Stomach (tissue), 19 donors: ENCODE measurements at regions of chr21 and their contacts with region 1.

Region 1: DNA sequence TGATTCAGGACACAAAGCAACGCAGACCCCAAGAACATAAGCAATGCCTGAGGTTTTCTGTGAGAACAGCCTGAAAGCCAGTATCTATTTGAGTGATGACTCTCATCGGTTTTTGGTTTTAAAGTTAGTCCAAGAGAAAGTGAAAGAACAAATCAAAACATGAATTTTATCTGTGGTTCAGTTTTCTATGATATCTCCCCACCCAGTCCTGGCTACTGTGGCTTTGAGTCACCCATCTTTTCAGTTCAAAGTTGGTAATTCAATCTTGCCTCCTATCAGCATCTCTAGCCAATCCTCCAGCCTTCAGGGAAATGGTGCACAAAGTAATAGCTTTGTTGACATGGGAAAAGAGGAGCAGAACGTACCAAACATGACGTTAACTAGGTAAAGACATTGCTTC is 40.5 kb upstream of the KRTAP19-8 start:
- DNase-seq: no peak
- H3K4me3 ChIP-seq: no peak overlapping the region
- H3K27ac ChIP-seq: no peak overlapping the region
- H3K4me1 ChIP-seq: no peaks in the 10 kb centered on the region
- H3K27me3 ChIP-seq: peaks cover 0 to 11% (median 0%) of the 10 kb centered on the region in 3 donors
- CTCF ChIP-seq: no peak
- EP300 ChIP-seq: no peak
- POLR2A ChIP-seq: no peak

Region 2: DNA sequence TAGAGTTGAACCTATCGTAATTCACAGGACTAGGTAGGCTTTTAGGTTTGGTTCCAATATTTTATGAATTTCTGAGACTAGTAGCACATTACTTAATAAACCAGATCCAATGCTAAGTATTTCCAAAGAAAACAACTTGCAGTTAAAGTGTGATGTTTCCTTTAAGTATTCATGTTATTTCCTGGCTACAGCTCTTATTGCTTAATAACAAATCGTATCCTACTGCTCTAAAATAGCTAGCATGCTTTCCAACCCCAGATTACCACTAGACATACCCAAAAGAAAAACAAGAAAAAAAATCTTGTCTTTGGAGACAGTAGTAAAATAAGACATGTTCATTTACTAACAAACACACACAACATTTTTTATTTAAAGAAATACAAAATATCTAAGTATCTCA is 742.2 kb before region 1 on chr21:
- intact Hi-C with region 1: loop called (anchors 10 kb)
- DNase-seq: no peak
- H3K4me3 ChIP-seq: no peak overlapping the region
- H3K27ac ChIP-seq: no peak overlapping the region
- H3K4me1 ChIP-seq: no peaks in the 10 kb centered on the region
- H3K27me3 ChIP-seq: no peaks in the 10 kb centered on the region
- CTCF ChIP-seq: no peak
- EP300 ChIP-seq: no peak
- POLR2A ChIP-seq: no peak

Region 3: DNA sequence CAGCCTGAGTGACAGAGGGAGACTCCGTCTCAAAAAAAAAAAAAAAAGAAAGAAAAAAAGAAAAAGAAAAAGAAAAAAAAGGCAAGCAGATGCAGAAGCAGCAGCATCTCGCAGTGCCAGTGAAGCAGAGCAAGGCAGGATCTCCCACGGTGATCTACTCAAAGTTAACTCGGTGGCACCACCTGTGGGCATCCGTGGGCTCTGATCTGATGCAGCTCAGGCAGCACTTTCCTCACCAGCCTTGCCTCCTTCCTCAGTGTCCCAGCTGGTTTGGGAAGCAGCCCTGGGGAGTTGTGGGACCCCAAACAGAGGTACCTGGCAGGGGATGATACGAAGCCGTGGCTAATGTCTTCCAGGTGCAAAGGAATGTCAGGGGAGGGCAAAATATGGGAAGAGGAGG is 63.8 kb after region 1 on chr21:
- intact Hi-C with region 1: no loop called
- DNase-seq: no peak
- H3K4me3 ChIP-seq: no peak overlapping the region
- H3K27ac ChIP-seq: no peak overlapping the region
- H3K4me1 ChIP-seq: peaks cover 0 to 9% (median 0%) of the 10 kb centered on the region in 4 donors
- H3K27me3 ChIP-seq: no peaks in the 10 kb centered on the region
- CTCF ChIP-seq: no peak
- EP300 ChIP-seq: no peak
- POLR2A ChIP-seq: no peak

Region 4: DNA sequence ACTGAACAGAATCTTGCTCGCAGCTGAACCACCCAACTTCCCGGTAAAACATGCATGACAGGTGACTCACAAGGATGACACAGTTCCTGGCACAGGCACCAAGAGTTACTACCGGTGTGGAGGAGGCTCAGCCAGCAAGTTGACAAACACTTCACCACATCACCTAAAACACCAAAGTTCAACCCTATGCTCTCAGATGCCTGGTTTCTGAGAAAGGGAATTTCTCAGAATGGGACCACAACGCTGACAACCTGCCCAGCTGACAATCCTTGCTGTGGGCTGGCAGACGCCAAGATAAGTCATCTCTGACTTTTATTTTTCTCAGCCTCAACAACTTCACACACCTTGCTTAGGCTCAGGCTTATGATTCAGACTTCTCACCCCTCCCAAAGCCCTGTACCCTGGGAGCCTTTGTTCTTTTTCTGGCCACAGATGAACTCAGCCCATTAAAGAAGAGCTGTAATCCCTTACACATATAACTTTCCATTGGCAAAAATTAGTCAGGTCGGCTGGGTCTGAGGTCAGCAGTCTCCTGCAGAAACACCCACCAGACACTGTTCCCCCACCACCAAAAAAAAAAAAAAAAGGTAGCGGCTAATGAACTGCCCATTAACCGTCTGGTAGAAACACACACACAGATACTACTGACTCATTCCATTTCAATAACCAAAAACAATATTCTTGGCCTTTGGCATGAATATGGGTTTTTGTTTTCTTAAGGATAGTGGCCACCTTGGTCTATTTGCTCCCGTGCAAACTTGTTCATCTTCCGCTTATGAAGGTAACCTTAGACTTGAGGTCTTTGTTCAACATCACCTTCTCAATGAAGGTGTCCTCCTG is 276.0 kb after region 1 on chr21:
- intact Hi-C with region 1: no loop called
- DNase-seq: peak; percentile 49 to 55
- H3K4me3 ChIP-seq: no peak overlapping the region
- H3K27ac ChIP-seq: peak overlapping the region in 2 of 5 donors; percentile 13 to 39
- H3K4me1 ChIP-seq: peaks cover 0 to 5% (median 0%) of the 10 kb centered on the region in 4 donors
- H3K27me3 ChIP-seq: no peaks in the 10 kb centered on the region
- CTCF ChIP-seq: no peak
- EP300 ChIP-seq: no peak
- POLR2A ChIP-seq: no peak